ENCODE measurements at regions of chr11 and their contacts with region 1.

Region 1: GRCh38 chr11:67428052-67428914 is at the start of gene RPS6KB2:
- DNase-seq: peak; percentile 96 to 97 (median 96)
- H3K4me3 ChIP-seq: peak within 1 kb of the TSS; percentile 79 to 93 (median 91)
- H3K4me3 Mint-ChIP-seq: peak within 1 kb of the TSS; percentile 99 to 100
- H3K27ac ChIP-seq: peak within 1 kb of the TSS; percentile 66 to 88
- H3K27ac Mint-ChIP-seq: peak within 1 kb of the TSS; percentile 92 to 97 (median 93)
- H3K4me1 ChIP-seq: peaks cover 16 to 20% of the 10 kb centered on the region in 2 donors
- H3K4me1 Mint-ChIP-seq: peaks cover 16% of the 10 kb centered on the region
- H3K27me3 ChIP-seq: no peaks in the 10 kb centered on the region
- H3K27me3 Mint-ChIP-seq: peaks cover 0 to 3% (median 1%) of the 10 kb centered on the region in 3 donors
- CTCF ChIP-seq: no peak
- polyA plus RNA-seq, gene RPS6KB2: 51.6 to 101 (median 53.8) TPM

Region 2: GRCh38 chr11:67391304-67392132 is 36.8 kb before region 1 on chr11 and contains the start of gene RAD9A:
- intact Hi-C with region 1: loop called in 1 of 2 experiments (anchors 5 kb)
- DNase-seq: peak; percentile 92 to 95 (median 93)
- H3K4me3 ChIP-seq: peak within 1 kb of the TSS; percentile 82 to 92 (median 85)
- H3K4me3 Mint-ChIP-seq: peak within 1 kb of the TSS; percentile 91 to 98
- H3K27ac ChIP-seq: peak within 1 kb of the TSS; percentile 75 to 89
- H3K27ac Mint-ChIP-seq: peak within 1 kb of the TSS; percentile 85 to 92 (median 88)
- H3K4me1 ChIP-seq: peaks cover 25 to 37% of the 10 kb centered on the region in 2 donors
- H3K4me1 Mint-ChIP-seq: peaks cover 41% of the 10 kb centered on the region
- H3K27me3 ChIP-seq: no peaks in the 10 kb centered on the region
- H3K27me3 Mint-ChIP-seq: peaks cover 0 to 8% (median 1%) of the 10 kb centered on the region in 3 donors
- CTCF ChIP-seq: no peak
- polyA plus RNA-seq, gene RAD9A: 3.7 to 31.7 (median 3.8) TPM

Region 3: GRCh38 chr11:67468835-67469811 is 40.8 kb after region 1 on chr11 and contains the start of gene TMEM134:
- intact Hi-C with region 1: loop called (anchors 2 to 5 kb)
- DNase-seq: peak; percentile 89 to 90 (median 90)
- H3K4me3 ChIP-seq: peak within 1 kb of the TSS; percentile 63 to 88 (median 66)
- H3K4me3 Mint-ChIP-seq: peak within 1 kb of the TSS; percentile 79 to 92
- H3K27ac ChIP-seq: peak within 1 kb of the TSS; percentile 41 to 90
- H3K27ac Mint-ChIP-seq: peak within 1 kb of the TSS in 5 of 7 donors; percentile 75 to 85 (median 79)
- H3K4me1 ChIP-seq: peaks cover 24 to 42% of the 10 kb centered on the region in 2 donors
- H3K4me1 Mint-ChIP-seq: peaks cover 27% of the 10 kb centered on the region
- H3K27me3 ChIP-seq: no peaks in the 10 kb centered on the region
- H3K27me3 Mint-ChIP-seq: peaks cover 0 to 12% (median 5%) of the 10 kb centered on the region in 3 donors
- CTCF ChIP-seq: peak; percentile 59
- polyA plus RNA-seq, gene TMEM134: 67.4 to 104 (median 76.8) TPM

Region 4: DNA sequence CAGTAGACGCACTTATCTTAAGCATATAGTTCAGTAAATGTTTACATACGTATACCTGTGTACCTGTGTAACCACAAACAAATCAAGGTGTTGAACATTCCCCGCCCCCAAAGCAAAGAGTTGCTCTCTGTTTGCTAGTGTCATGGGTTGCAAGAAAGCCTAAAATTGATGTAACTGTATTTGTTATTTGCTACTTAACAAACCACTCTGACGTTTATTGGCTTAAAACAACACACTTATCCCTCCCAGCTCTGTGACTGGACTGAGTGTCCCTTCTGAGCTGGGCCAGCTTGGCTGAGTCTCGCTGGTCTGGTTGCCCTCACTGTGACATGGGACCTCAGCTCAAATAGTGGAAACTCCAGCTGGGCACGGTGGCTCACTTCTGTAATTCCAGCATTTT is 120.3 kb after region 1 on chr11:
- intact Hi-C with region 1: no loop called
- DNase-seq: no peak
- H3K4me3 ChIP-seq: no peak overlapping the region
- H3K4me3 Mint-ChIP-seq: no peak overlapping the region
- H3K27ac ChIP-seq: no peak overlapping the region
- H3K27ac Mint-ChIP-seq: no peak overlapping the region
- H3K4me1 ChIP-seq: no peaks in the 10 kb centered on the region
- H3K4me1 Mint-ChIP-seq: no peaks in the 10 kb centered on the region
- H3K27me3 ChIP-seq: no peaks in the 10 kb centered on the region
- H3K27me3 Mint-ChIP-seq: peaks cover 3 to 16% (median 10%) of the 10 kb centered on the region in 3 donors
- CTCF ChIP-seq: no peak

Region 5: GRCh38 chr11:68741463-68741862 is 1313.2 kb after region 1 on chr11:
- intact Hi-C with region 1: no loop called
- DNase-seq: no peak
- H3K4me3 ChIP-seq: no peak overlapping the region
- H3K4me3 Mint-ChIP-seq: no peak overlapping the region
- H3K27ac ChIP-seq: no peak overlapping the region
- H3K27ac Mint-ChIP-seq: peak overlapping the region in 2 of 7 donors; percentile 6 to 56
- H3K4me1 ChIP-seq: peaks cover 11 to 13% of the 10 kb centered on the region in 2 donors
- H3K4me1 Mint-ChIP-seq: peaks cover 18% of the 10 kb centered on the region
- H3K27me3 ChIP-seq: no peaks in the 10 kb centered on the region
- H3K27me3 Mint-ChIP-seq: no peaks in the 10 kb centered on the region
- CTCF ChIP-seq: no peak

Measured in CD14-positive monocyte (primary cell).